Dorsolateral prefrontal cortex (tissue), 120 donors: ENCODE measurements at regions of chr4 and their contacts with region 1.

Region 1: DNA sequence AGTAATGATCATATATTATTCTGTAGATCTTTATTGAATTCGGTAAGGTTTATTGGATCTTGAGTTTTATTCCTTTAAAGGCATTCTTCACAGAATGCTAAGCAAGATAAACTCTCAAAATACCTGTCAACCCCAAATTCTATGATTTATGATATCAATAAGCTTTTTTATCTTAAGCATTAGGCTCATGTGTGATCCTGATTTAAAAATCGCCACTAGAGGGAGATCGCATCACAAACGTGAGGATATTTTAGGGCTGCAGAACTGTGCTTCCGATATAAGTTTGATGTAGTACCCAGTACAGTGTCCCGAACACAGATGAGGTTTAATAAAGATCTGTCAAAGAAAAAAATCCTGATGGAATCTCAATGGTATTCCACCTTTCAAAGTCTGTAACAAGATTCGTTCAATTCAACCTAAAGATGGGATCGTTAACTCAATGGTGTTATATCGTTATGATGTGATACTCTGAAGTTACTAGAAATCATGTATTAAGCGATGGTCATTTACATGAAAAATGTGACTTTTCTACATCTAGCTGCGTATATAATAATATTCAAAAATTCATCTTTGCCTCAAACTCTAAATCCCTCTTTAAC is 169.0 kb downstream of the CORIN start:
- DNase-seq: peak in 1 of 10 donors; percentile 20
- H3K4me3 ChIP-seq: peak overlapping the region in 3 of 59 donors; percentile 7 to 21 (median 15)
- H3K27ac ChIP-seq: no peak overlapping the region
- H3K27me3 ChIP-seq: peaks cover 0 to 7% (median 0%) of the 10 kb centered on the region in 45 donors
- CTCF ChIP-seq: peak; percentile 63 to 85 (median 77)

Region 2: DNA sequence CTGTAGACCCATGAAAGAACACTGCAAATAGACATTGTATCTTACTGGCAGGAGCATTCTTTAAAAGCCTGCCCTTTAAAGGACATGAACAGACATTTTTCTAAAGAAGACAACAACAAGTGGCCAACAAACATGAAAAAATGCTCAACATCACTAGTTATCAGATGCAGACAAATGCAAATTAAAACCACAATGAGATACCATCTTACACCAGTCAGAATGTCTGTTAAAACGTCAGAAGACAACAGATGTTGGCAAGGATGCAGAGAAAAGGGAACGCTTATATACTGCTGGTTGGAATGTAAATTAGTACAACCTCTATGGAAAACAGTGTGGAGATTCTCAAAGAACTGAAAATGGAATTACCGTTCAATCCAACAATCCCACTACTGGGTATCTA is 106.6 kb before region 1 on chr4:
- intact Hi-C with region 1: no loop called
- DNase-seq: no peak
- H3K4me3 ChIP-seq: no peak overlapping the region
- H3K27ac ChIP-seq: no peak overlapping the region
- H3K27me3 ChIP-seq: no peaks in the 10 kb centered on the region
- CTCF ChIP-seq: no peak

Region 3: GRCh38 chr4:47836641-47837093 is 167.8 kb after region 1 on chr4:
- intact Hi-C with region 1: loop called in 1 of 2 experiments (anchors 2 kb)
- DNase-seq: peak; percentile 56 to 85 (median 78)
- H3K4me3 ChIP-seq: peak overlapping the region; percentile 21 to 78 (median 57)
- H3K27ac ChIP-seq: no peak overlapping the region
- H3K27me3 ChIP-seq: peaks cover 0 to 8% (median 0%) of the 10 kb centered on the region in 45 donors
- CTCF ChIP-seq: peak in 55 of 56 donors; percentile 22 to 75 (median 60)

Region 4: GRCh38 chr4:47926639-47927258 is 257.8 kb after region 1 on chr4:
- intact Hi-C with region 1: loop called in 1 of 2 experiments (anchors 5 kb)
- DNase-seq: peak in 8 of 10 donors; percentile 26 to 73 (median 60)
- H3K4me3 ChIP-seq: peak overlapping the region in 46 of 59 donors; percentile 4 to 58 (median 32)
- H3K27ac ChIP-seq: no peak overlapping the region
- H3K27me3 ChIP-seq: no peaks in the 10 kb centered on the region
- CTCF ChIP-seq: peak in 54 of 56 donors; percentile 40 to 78 (median 64)